ENCODE measurements at regions of chr10 and their contacts with region 1.

Region 1: GRCh38 chr10:23325132-23325531 is 19.5 kb downstream of the C10orf67 start:
- DNase-seq: peak; percentile 15
- H3K4me3 Mint-ChIP-seq: no peak overlapping the region
- H3K27ac Mint-ChIP-seq: no peak overlapping the region
- H3K4me1 Mint-ChIP-seq: no peaks in the 10 kb centered on the region
- H3K27me3 Mint-ChIP-seq: no peaks in the 10 kb centered on the region
- CTCF ChIP-seq: no peak

Region 2: GRCh38 chr10:23453465-23453864 is 128.3 kb after region 1 on chr10:
- CTCF ChIA-PET with region 1: no interaction called
- POLR2A ChIA-PET with region 1: no interaction called
- intact Hi-C with region 1: no loop called
- DNase-seq: no peak
- H3K4me3 Mint-ChIP-seq: no peak overlapping the region
- H3K27ac Mint-ChIP-seq: no peak overlapping the region
- H3K4me1 Mint-ChIP-seq: peaks cover 8% of the 10 kb centered on the region
- H3K27me3 Mint-ChIP-seq: no peaks in the 10 kb centered on the region
- CTCF ChIP-seq: no peak

Region 3: DNA sequence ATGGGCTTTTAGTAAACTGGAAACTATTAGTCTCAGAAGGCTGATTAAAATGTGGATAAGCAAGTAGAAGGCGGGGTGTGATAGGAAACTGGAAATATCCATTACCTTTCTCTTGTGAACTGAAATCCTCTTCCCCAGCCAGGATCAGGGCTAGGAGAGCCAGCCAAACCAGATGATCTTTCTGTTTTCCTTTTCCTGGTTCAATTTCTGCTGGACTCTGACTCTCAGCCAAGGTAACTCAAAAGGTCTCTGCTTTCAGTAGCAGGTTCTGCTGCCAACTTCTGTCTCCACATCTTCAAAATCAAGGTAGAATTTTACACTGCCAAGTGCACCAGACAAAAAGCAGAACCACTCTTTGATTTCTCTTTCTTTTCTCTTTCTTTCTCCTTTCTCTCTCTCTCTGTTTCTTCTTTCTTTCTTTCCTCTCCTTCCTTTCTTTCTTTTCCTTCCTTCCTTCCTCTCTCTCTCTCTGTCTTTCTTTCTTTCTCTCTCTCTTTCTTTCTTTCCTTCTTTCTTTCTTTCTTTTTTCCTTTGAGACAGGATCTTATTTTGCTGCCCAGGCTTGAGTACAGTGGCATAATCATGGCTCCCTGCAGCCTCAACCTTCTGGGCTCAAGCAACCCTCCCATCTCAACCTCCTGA is 144.6 kb after region 1 on chr10:
- CTCF ChIA-PET with region 1: no interaction called
- POLR2A ChIA-PET with region 1: no interaction called
- intact Hi-C with region 1: no loop called
- DNase-seq: no peak
- H3K4me3 Mint-ChIP-seq: no peak overlapping the region
- H3K27ac Mint-ChIP-seq: no peak overlapping the region
- H3K4me1 Mint-ChIP-seq: no peaks in the 10 kb centered on the region
- H3K27me3 Mint-ChIP-seq: peaks cover 13% of the 10 kb centered on the region
- CTCF ChIP-seq: no peak

Region 4: GRCh38 chr10:23525406-23525805 is 200.3 kb after region 1 on chr10:
- CTCF ChIA-PET with region 1: interaction called, 304 read pairs
- POLR2A ChIA-PET with region 1: interaction called, 4 read pairs
- intact Hi-C with region 1: no loop called
- DNase-seq: peak; percentile 61
- H3K4me3 Mint-ChIP-seq: no peak overlapping the region
- H3K27ac Mint-ChIP-seq: no peak overlapping the region
- H3K4me1 Mint-ChIP-seq: peaks cover 6% of the 10 kb centered on the region
- H3K27me3 Mint-ChIP-seq: no peaks in the 10 kb centered on the region
- CTCF ChIP-seq: peak; percentile 76